IMR-90 (cell line): ENCODE measurements at regions of chr15 and their contacts with region 1.

Region 1: GRCh38 chr15:52217186-52217585 is 26.0 kb upstream of the GNB5 start:
- DNase-seq: no peak
- ATAC-seq: no peak
- H3K4me3 ChIP-seq: no peak overlapping the region
- H3K27ac ChIP-seq: no peak overlapping the region
- H3K4me1 ChIP-seq: peaks cover 1% of the 10 kb centered on the region; the same call in 1 of the 2 replicates
- H3K27me3 ChIP-seq: peaks cover 38% of the 10 kb centered on the region
- CTCF ChIP-seq: no peak
- POLR2A ChIP-seq: no peak
- RAD21 ChIP-seq: no peak

Region 2: DNA sequence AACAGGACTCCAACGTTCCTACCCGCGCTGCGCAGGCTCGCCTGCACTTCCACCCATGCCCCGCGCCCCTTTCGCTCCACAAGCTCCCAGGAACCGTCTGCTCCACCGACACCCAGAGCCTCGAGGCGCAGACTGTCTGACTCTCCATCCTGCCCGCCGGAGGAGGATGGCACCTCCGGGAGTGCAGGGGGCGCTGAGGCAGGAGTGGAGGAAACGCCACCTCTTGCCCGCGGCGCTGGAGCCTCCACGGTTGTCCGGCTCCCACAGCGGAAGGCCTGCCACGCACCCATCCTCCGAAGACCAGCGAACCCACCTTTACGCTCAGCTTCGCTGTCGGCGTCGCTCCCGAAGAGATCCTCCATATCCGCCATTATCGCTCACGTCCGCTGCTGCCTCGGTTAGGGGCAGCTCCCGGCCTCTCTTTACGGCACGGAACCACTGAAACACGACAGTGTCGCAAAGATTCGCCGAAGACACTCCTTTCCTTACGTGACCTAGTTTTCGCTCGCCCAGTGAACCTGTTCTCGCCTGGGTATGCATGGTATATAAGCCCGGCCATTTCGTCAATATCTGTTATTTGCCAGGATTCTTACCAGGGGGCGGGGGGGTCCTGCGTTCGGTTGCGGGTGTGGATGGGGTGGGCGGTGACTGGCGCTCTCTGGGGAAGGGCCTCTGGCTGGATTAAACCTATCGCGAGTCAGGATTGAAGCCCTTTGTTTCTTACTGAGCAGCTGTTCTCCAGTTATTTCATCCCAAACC is 245.6 kb before region 1 on chr15 and contains the start of gene LEO1:
- CTCF ChIA-PET with region 1: no interaction called
- POLR2A ChIA-PET with region 1: no interaction called
- dilution Hi-C with region 1: no loop called
- in situ Hi-C with region 1: loop called (anchors 10 kb)
- intact Hi-C with region 1: no loop called
- DNase-seq: peak; percentile 98
- ATAC-seq: peak; percentile 93
- H3K4me3 ChIP-seq: peak within 1 kb of the TSS; percentile 73
- H3K27ac ChIP-seq: peak within 1 kb of the TSS; percentile 91
- H3K4me1 ChIP-seq: 0 out of 2 replicates have a peak, but pooled peaks cover 2% of the 10 kb centered on the region
- H3K27me3 ChIP-seq: no peaks in the 10 kb centered on the region
- CTCF ChIP-seq: peak; percentile 38
- POLR2A ChIP-seq: peak; percentile 86
- RAD21 ChIP-seq: peak; percentile 0; the same call in 1 of the 2 replicates
- total RNA-seq, gene LEO1: 11.5 and 30.3 TPM in 2 replicates